B cell (primary cell): ENCODE measurements at regions of chrX and their contacts with region 1.

Region 1: DNA sequence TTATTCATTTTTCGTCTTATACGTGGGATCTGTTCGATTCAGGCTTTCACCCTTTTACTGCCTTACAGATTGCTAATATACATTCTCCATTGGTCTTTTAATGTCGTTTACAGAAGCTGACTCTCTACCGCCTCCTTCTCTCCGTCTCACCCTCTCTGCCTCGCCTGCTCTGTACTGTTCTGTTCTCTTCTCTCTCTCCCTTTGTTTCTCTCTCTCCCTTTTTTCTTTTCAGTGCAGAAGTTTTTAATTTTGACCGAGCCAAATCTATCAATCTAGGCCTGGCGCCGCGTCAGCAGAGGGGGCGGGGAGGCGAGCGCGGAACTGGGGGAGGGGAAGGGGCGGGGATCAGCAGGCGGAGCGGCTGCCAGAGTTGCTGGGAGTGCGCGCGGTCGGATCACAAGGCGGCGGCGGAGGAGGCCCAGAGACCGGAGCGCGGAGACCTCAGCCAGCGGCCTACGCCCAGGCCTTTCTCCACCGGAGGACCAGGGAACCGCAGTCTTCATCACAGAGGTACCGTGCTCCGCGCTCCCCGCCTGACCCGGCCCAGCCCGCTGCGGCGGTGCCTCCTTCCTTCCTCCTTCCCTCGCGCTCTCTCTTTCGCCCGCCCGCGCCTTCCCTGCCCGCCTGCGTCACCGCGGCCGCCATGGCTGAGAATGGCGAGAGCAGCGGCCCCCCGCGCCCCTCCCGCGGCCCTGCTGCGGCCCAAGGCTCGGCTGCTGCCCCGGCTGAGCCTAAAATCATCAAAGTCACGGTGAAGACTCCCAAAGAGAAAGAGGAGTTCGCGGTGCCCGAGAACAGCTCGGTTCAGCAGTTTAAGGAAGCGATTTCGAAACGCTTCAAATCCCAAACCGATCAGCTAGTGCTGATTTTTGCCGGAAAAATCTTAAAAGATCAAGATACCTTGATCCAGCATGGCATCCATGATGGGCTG is at the start of gene UBQLN2:
- DNase-seq: peak; percentile 82
- ATAC-seq: peak; percentile 85
- H3K4me3 ChIP-seq: peak within 1 kb of the TSS; percentile 65 to 85 (median 75)
- H3K4me3 Mint-ChIP-seq: peak within 1 kb of the TSS; percentile 93
- H3K27ac ChIP-seq: peak within 1 kb of the TSS; percentile 88 to 92
- H3K27ac Mint-ChIP-seq: peak within 1 kb of the TSS; percentile 97
- H3K4me1 ChIP-seq: peaks cover 11 to 15% of the 10 kb centered on the region in 2 donors
- H3K4me1 Mint-ChIP-seq: peaks cover 25% of the 10 kb centered on the region
- H3K27me3 ChIP-seq: no peaks in the 10 kb centered on the region
- H3K27me3 Mint-ChIP-seq: no peaks in the 10 kb centered on the region
- CTCF ChIP-seq: no peak
- total RNA-seq, gene UBQLN2: 33.8 and 35.3 TPM in 2 replicates

Region 2: GRCh38 chrX:56232221-56233082 is 331.0 kb before region 1 on chrX and contains the start of gene KLF8:
- CTCF ChIA-PET with region 1: no interaction called
- POLR2A ChIA-PET with region 1: no interaction called
- intact Hi-C with region 1: loop called (anchors 5 kb)
- DNase-seq: peak; percentile 64
- ATAC-seq: peak; percentile 80
- H3K4me3 ChIP-seq: peak within 1 kb of the TSS; percentile 11 to 76 (median 58)
- H3K4me3 Mint-ChIP-seq: peak within 1 kb of the TSS; percentile 88
- H3K27ac ChIP-seq: peak within 1 kb of the TSS; percentile 50 to 64
- H3K27ac Mint-ChIP-seq: peak within 1 kb of the TSS; percentile 90
- H3K4me1 ChIP-seq: peaks cover 19 to 25% of the 10 kb centered on the region in 2 donors
- H3K4me1 Mint-ChIP-seq: peaks cover 37% of the 10 kb centered on the region
- H3K27me3 ChIP-seq: no peaks in the 10 kb centered on the region
- H3K27me3 Mint-ChIP-seq: no peaks in the 10 kb centered on the region
- CTCF ChIP-seq: no peak
- total RNA-seq, gene KLF8: 42.7 and 43.1 TPM in 2 replicates

Region 3: GRCh38 chrX:56314334-56314733 is 249.2 kb before region 1 on chrX:
- CTCF ChIA-PET with region 1: no interaction called
- POLR2A ChIA-PET with region 1: no interaction called
- intact Hi-C with region 1: no loop called
- DNase-seq: no peak
- ATAC-seq: no peak
- H3K4me3 ChIP-seq: no peak overlapping the region
- H3K4me3 Mint-ChIP-seq: no peak overlapping the region
- H3K27ac ChIP-seq: no peak overlapping the region
- H3K27ac Mint-ChIP-seq: no peak overlapping the region
- H3K4me1 ChIP-seq: no peaks in the 10 kb centered on the region
- H3K4me1 Mint-ChIP-seq: peaks cover 2% of the 10 kb centered on the region
- H3K27me3 ChIP-seq: no peaks in the 10 kb centered on the region
- H3K27me3 Mint-ChIP-seq: no peaks in the 10 kb centered on the region
- CTCF ChIP-seq: no peak

Region 4: GRCh38 chrX:56600987-56601386 is 37.5 kb after region 1 on chrX:
- CTCF ChIA-PET with region 1: no interaction called
- POLR2A ChIA-PET with region 1: no interaction called
- intact Hi-C with region 1: no loop called
- DNase-seq: no peak
- ATAC-seq: no peak
- H3K4me3 ChIP-seq: no peak overlapping the region
- H3K4me3 Mint-ChIP-seq: no peak overlapping the region
- H3K27ac ChIP-seq: no peak overlapping the region
- H3K27ac Mint-ChIP-seq: no peak overlapping the region
- H3K4me1 ChIP-seq: no peaks in the 10 kb centered on the region
- H3K4me1 Mint-ChIP-seq: peaks cover 3% of the 10 kb centered on the region
- H3K27me3 ChIP-seq: no peaks in the 10 kb centered on the region
- H3K27me3 Mint-ChIP-seq: no peaks in the 10 kb centered on the region
- CTCF ChIP-seq: no peak

Region 5: DNA sequence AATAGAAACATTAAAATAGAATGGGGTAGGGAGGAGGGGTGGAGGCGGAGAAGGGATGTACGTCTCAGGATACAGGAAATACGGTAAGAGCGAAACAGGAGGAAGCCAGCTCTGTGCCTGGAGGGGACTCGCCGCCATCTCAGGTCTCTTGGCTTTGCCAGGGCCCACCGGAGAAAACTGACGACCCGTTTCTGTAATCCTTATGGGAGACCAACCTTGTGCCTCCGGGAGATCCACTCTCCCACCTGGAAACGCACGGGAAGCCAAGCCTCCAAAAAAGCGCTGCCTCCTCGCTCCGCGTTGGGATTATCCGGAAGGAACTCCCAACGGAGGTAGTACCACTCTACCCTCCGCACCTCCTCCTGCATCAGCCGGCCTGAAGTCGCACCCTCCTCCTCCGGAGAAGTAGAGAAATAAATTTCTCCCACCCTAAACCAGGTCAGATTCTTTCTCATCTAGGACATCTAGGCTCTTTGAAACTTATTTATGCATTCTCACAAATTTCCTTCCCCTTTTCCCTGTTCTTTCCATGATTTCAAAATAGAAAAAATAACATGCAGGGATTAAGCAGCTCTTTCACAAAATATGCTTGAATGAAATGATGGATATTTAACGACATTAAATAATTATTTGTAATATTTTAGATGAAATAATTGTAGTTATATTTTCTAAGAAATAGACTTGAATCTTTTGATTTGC is 165.8 kb after region 1 on chrX and contains the start of gene NBDY:
- CTCF ChIA-PET with region 1: no interaction called
- POLR2A ChIA-PET with region 1: no interaction called
- intact Hi-C with region 1: loop called (anchors 2 kb)
- DNase-seq: peak; percentile 53
- ATAC-seq: peak; percentile 76
- H3K4me3 ChIP-seq: peak within 1 kb of the TSS; percentile 67 to 78 (median 71)
- H3K4me3 Mint-ChIP-seq: peak within 1 kb of the TSS; percentile 96
- H3K27ac ChIP-seq: peak within 1 kb of the TSS; percentile 78 to 86
- H3K27ac Mint-ChIP-seq: peak within 1 kb of the TSS; percentile 90
- H3K4me1 ChIP-seq: peaks cover 5 to 11% of the 10 kb centered on the region in 2 donors
- H3K4me1 Mint-ChIP-seq: peaks cover 28% of the 10 kb centered on the region
- H3K27me3 ChIP-seq: no peaks in the 10 kb centered on the region
- H3K27me3 Mint-ChIP-seq: no peaks in the 10 kb centered on the region
- CTCF ChIP-seq: no peak
- total RNA-seq, gene NBDY: 31.8 and 36.5 TPM in 2 replicates

Region 6: GRCh38 chrX:56995271-56995994 is 431.9 kb after region 1 on chrX and contains the start of gene SPIN3:
- CTCF ChIA-PET with region 1: no interaction called
- POLR2A ChIA-PET with region 1: no interaction called
- intact Hi-C with region 1: loop called (anchors 5 kb)
- DNase-seq: peak; percentile 55
- ATAC-seq: peak; percentile 80
- H3K4me3 ChIP-seq: peak within 1 kb of the TSS in 4 of 5 experiments; percentile 48 to 58 (median 52)
- H3K4me3 Mint-ChIP-seq: peak within 1 kb of the TSS; percentile 96
- H3K27ac ChIP-seq: peak within 1 kb of the TSS; percentile 41 to 55
- H3K27ac Mint-ChIP-seq: peak within 1 kb of the TSS; percentile 92
- H3K4me1 ChIP-seq: peaks cover 3% of the 10 kb centered on the region in 2 donors
- H3K4me1 Mint-ChIP-seq: peaks cover 29% of the 10 kb centered on the region
- H3K27me3 ChIP-seq: peaks cover 0 to 5% (median 0%) of the 10 kb centered on the region in 4 experiments
- H3K27me3 Mint-ChIP-seq: no peaks in the 10 kb centered on the region
- CTCF ChIP-seq: no peak
- total RNA-seq, gene SPIN3: 19.4 and 20.6 TPM in 2 replicates

Region 7: DNA sequence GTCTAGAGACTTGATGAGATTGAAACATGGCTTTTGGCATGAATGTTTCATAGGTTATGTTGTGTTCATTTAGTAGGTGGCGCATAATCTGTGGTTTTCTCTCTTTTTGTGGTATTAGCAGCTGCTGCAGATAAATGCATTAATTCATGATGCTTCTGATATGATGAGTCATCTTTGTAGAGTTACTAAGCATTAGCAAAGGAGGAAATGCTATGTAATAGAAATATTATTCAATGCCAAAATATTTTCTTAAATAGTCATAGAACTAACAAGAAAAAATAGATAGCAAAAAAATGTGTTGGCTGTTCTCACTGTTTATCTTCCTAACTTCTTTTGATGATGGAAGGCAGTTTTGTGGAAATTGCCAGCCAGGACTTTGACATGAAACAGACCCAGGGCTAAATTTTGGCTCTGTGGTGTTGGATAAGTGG is 1031.9 kb after region 1 on chrX:
- CTCF ChIA-PET with region 1: no interaction called
- POLR2A ChIA-PET with region 1: no interaction called
- intact Hi-C with region 1: loop called (anchors 5 kb)
- DNase-seq: no peak
- ATAC-seq: no peak
- H3K4me3 ChIP-seq: peak overlapping the region in 1 of 5 experiments; percentile 8
- H3K4me3 Mint-ChIP-seq: peak overlapping the region; percentile 78
- H3K27ac ChIP-seq: no peak overlapping the region
- H3K27ac Mint-ChIP-seq: no peak overlapping the region
- H3K4me1 ChIP-seq: peaks cover 22 to 29% of the 10 kb centered on the region in 2 donors
- H3K4me1 Mint-ChIP-seq: peaks cover 42% of the 10 kb centered on the region
- H3K27me3 ChIP-seq: no peaks in the 10 kb centered on the region
- H3K27me3 Mint-ChIP-seq: no peaks in the 10 kb centered on the region
- CTCF ChIP-seq: no peak